ENCODE measurements at regions of chr10 and their contacts with region 1.

Region 1: DNA sequence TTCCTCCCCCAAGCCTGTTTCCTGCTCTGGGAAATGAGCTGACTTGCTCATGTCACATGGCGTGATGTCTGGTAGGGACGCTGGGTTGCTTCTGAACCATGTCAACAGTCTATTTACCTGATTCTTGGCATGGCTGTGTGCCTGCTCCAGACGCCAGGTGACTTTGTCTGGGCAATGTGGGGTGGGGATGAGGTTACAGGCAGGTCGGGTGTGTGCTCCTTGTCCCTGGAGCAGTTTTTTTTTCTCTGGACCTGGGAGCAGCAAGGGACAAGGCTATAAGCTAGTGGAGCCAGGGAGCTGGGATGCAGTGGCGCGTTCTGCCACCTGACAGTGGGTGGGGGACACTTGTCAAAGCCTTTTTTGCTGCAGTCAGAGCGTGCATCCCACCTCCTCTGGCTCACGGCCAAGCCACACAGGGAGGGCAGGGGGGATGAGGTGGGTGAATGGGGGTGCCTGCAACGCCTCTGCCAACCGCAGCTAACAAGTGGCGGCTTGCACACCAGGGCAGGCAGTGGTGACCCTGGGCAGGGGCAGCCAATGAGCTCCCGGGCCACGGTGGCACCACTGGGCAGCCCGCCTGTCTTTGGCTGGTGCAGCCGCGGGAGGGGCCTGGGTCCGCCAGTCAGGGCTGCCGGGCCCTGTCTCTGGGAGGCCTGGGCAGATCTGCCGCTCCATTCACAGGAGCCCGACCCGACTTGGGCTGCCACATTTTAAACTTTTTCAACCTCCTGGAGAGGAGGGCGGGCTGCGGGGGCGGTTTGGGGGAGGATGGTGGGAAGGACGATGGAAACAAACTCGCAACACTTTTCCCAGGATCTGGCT is 22.9 kb downstream of the DNAJB12 start:
- DNase-seq: peak; percentile 98
- H3K4me3 Mint-ChIP-seq: peak overlapping the region; percentile 63
- H3K27ac Mint-ChIP-seq: peak overlapping the region; percentile 99
- H3K4me1 Mint-ChIP-seq: peaks cover 85% of the 10 kb centered on the region
- H3K27me3 Mint-ChIP-seq: peaks cover 2% of the 10 kb centered on the region

Region 2: DNA sequence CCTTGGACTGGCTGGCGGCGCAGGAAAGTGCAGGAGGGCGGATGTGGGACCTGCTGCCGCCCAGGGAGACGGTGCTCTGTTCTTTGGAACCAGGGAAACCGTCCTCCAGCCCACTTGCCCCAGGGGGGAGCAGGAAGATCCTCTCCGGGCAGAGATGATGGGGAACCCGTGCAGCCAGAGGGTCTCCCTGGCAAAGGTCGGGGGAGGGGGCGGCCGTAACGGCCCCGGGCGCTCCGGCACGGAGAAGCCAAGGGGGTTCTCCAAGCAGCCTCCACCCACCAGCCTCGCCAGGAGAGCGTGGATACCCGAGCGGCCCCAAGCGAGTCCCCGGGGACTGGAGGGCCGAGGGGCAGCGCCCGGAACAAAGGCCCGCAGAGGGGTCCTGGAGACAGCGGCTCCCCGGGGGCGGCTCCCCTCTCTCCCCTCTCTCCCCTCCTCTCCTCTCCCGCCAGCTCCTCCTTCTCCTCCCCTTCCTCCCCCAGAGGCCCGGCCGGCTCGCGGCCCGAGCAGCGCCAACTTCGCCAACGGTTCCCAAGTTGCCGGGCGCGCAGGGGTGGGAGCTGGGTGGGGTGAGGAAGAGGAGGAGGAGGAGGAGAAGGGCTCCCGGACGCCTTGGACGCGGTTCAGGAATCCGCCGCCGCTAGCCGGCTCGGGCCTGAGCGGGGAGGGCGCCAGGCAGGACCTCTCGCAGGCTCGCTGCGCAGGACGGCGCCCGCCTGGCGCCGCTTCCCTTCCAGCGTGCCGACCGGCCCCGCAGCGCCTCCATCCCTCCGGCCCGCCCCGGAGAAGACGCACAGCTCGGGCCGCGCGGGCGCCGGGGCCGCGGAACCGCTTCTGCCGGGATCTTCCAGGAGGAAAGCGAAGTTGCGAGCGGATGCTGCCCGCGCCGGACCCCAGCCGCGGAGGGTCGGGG is 367.8 kb before region 1 on chr10 and contains the start of gene CHST3:
- CTCF ChIA-PET with region 1: no interaction called
- POLR2A ChIA-PET with region 1: no interaction called
- intact Hi-C with region 1: loop called (anchors 10 kb)
- DNase-seq: no peak
- H3K4me3 Mint-ChIP-seq: peak within 1 kb of the TSS; percentile 66
- H3K27ac Mint-ChIP-seq: no peak within 1 kb of the TSS
- H3K4me1 Mint-ChIP-seq: peaks cover 9% of the 10 kb centered on the region
- H3K27me3 Mint-ChIP-seq: peaks cover 54% of the 10 kb centered on the region
- total RNA-seq, gene CHST3: 0.19 to 0.31 TPM

Region 3: DNA sequence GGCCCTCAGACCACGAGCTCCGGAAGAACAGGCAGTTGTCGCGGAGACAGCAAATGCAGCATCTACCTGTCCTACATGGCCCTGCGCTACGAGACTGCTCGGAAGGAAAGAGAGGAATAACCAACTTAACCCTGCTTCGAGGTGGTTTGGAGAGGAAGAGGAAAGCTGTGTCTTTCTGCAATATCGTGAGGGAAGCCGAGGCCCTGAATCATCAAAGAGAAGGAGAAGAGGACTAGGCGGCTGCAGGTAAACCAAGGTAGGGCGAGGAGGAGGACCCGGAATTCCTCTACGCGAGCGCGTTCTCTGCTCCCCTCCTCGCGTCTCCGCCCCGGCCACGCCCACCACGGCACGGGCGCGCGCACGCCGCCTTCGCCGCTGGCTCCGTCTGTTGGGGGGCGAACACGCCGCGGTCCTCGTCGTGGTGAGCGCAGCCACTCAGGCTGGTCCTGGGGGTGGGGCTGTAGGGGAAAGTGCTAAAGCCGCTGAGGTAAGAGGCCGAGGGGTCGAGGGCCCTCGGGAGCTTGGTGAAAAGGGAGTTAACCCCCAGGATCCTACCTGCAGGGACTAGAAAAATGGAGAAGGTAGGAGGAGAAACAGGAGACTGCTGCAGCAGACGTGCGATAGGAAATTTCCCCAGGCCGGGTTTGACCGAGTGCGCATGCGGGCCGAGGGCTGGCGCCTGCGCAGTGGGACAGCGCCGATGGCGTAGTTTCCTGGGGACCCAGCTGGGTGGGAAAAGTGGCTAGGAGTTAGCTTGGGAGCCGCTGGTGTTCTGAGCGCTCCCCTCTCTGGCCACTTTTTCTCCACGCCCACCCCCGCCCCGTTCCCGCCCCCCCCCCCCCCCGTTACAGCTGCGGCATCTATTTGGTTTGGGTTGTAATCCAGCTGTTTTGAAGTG is 115.9 kb before region 1 on chr10 and contains the starts of genes ANAPC16 and ASCC1:
- CTCF ChIA-PET with region 1: interaction called, 87 read pairs
- POLR2A ChIA-PET with region 1: interaction called, 13 read pairs
- intact Hi-C with region 1: loop called (anchors 2 kb)
- DNase-seq: peak; percentile 96
- H3K4me3 Mint-ChIP-seq: peak within 1 kb of the TSS; percentile 95
- H3K27ac Mint-ChIP-seq: peak within 1 kb of the TSS; percentile 98
- H3K4me1 Mint-ChIP-seq: peaks cover 53% of the 10 kb centered on the region
- H3K27me3 Mint-ChIP-seq: no peaks in the 10 kb centered on the region
- total RNA-seq, gene ANAPC16: 119 to 122 TPM
- total RNA-seq, gene ASCC1: 50.9 to 52.5 TPM

Region 4: DNA sequence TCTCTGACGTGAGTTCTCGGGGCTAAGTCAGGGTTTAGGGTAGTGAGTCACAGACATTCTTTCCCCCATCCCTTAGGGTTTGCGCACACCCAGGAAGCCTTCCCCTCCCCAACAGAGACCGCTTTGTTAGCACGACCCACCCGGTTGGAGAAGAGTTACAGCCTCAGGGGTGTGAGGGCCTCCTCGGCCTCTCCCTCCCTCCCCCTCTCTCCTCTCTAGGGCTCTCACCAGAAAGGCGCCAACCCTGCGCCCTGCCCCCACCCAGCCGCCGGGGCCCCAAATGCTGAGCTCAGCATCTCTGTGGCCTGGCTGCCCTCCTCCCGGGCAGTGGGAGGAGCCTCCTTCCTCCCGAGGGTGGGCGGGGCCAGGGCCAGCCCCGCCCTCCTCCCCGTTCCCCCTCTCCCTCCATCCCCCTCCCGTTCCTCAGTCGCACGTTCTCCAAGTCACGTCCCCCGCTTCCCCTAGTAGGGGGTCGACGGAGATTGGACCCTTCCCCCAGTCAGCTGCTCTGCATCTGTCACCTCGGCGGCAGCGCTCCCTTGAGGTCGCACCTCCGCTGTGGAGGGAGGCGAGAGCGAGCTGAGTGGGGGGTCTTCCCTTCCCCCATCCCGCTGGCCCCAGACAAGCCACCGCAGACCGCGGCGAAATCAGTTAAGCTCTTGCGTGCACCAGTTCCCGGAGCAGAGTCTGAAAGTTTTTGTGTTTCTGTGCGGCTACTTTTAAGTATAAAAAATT is 71.1 kb before region 1 on chr10:
- CTCF ChIA-PET with region 1: interaction called, 9 read pairs
- POLR2A ChIA-PET with region 1: interaction called, 16 read pairs
- intact Hi-C with region 1: loop called (anchors 1 kb)
- DNase-seq: peak; percentile 95
- H3K4me3 Mint-ChIP-seq: peak overlapping the region; percentile 84
- H3K27ac Mint-ChIP-seq: peak overlapping the region; percentile 99
- H3K4me1 Mint-ChIP-seq: peaks cover 60% of the 10 kb centered on the region
- H3K27me3 Mint-ChIP-seq: peaks cover 2% of the 10 kb centered on the region

Region 5: DNA sequence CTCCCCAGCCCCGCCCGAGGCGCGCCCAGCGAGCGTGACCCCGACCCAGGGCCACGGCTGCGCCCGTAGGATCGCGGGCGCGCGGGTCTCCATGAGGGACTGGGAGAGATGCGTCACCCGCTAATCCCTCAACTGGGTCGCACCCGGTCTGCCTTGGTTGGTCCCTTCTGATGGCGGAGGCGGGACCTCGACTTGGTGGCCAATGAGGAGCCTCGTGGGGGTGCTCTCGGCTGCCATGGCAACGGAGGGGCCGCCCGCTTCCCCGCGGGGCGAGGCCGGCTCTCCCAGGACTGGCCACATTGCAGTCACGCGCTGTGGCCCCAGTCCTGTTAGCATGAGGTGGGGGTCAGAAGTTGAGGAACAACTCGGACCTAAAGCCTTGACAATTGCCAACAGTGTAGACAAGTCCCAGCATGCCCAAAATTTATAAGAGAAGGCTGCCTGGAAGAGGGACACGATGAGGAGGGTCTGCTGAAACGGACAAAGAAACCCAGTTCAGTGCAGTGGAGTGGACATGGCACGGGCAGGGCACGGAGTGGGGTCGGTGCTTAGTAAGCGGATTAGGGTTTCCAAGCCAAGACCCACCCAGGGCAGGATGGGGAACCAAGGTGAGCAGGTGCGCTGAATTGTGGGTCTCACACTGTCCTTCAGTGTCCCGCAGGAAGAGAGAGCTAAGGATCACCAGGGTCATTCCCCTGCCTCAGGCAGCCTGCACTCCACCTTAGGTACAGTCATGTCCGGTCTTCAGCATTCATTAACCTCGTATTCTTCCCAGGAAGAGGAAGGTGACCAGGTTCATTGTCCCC is 33.6 kb before region 1 on chr10:
- CTCF ChIA-PET with region 1: interaction called, 17 read pairs
- POLR2A ChIA-PET with region 1: interaction called, 80 read pairs
- intact Hi-C with region 1: loop called (anchors 1 kb)
- DNase-seq: peak; percentile 98
- H3K4me3 Mint-ChIP-seq: peak overlapping the region; percentile 86
- H3K27ac Mint-ChIP-seq: peak overlapping the region; percentile 100
- H3K4me1 Mint-ChIP-seq: peaks cover 56% of the 10 kb centered on the region
- H3K27me3 Mint-ChIP-seq: peaks cover 3% of the 10 kb centered on the region

Region 6: GRCh38 chr10:72354478-72355213 is 22.8 kb after region 1 on chr10 and contains the start of gene DNAJB12:
- CTCF ChIA-PET with region 1: interaction called, 14 read pairs
- POLR2A ChIA-PET with region 1: interaction called, 4 read pairs
- intact Hi-C with region 1: loop called (anchors 1 kb)
- DNase-seq: peak; percentile 93
- H3K4me3 Mint-ChIP-seq: peak within 1 kb of the TSS; percentile 97
- H3K27ac Mint-ChIP-seq: peak within 1 kb of the TSS; percentile 96
- H3K4me1 Mint-ChIP-seq: peaks cover 35% of the 10 kb centered on the region
- H3K27me3 Mint-ChIP-seq: no peaks in the 10 kb centered on the region
- total RNA-seq, gene DNAJB12: 18.9 to 19.8 TPM

Region 7: GRCh38 chr10:72455889-72456595 is 124.2 kb after region 1 on chr10:
- CTCF ChIA-PET with region 1: no interaction called
- POLR2A ChIA-PET with region 1: no interaction called
- intact Hi-C with region 1: no loop called
- DNase-seq: no peak
- H3K4me3 Mint-ChIP-seq: no peak overlapping the region
- H3K27ac Mint-ChIP-seq: no peak overlapping the region
- H3K4me1 Mint-ChIP-seq: no peaks in the 10 kb centered on the region
- H3K27me3 Mint-ChIP-seq: no peaks in the 10 kb centered on the region

Measured in activated CD4-positive, alpha-beta memory T cell treated with anti-CD3 and anti-CD28 coated beads for 36 hours (primary cell).